ENCODE measurements at regions of chr3 and their contacts with region 1.

Region 1: DNA sequence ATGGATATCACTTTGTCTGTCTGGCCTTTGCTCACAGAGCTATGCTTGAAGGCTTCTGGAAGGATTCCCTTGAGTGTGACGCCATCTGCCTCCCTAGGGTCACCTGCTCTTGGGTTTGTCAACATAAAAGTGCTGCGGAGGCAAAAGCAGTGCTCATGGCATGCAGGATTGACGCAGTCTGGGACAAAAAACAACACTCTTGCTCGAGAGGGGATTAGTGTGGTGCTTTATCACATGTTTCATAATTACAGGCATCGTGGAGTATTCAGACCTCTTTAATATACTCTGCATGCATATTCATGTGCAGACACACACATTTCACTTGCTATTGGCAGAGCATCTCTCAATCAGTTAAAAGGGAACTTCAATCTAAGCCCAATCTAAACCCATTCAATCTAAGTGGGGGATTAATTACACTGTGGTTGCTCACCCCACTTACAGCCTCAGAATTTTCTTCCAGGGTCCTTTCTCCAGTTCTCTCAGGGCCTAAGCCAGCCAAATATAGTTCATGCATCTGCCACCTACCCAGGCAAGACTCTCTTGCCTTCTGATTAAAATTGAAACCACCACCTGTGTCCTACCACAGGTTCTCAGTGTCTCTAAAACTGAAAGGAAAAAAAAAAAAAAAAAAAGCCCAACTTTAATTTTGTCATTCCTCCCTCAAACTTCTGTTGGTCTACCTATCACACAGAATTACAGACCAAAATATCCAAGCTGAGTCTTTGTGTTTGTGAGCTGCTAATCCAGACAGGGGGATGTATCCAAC is 75.6 kb downstream of the BFSP2 start:
- DNase-seq: peak; percentile 37
- ATAC-seq: peak; percentile 96
- H3K4me3 Mint-ChIP-seq: no peak overlapping the region
- H3K27ac Mint-ChIP-seq: peak overlapping the region; percentile 52
- H3K4me1 Mint-ChIP-seq: peaks cover 49% of the 10 kb centered on the region
- H3K27me3 Mint-ChIP-seq: no peaks in the 10 kb centered on the region

Region 2: GRCh38 chr3:133448478-133449122 is 26.8 kb before region 1 on chr3:
- CTCF ChIA-PET with region 1: no interaction called
- POLR2A ChIA-PET with region 1: interaction called, 5 read pairs
- intact Hi-C with region 1: loop called in 1 of 2 experiments (anchors 1 kb)
- DNase-seq: peak; percentile 77
- ATAC-seq: peak; percentile 93
- H3K4me3 Mint-ChIP-seq: no peak overlapping the region
- H3K27ac Mint-ChIP-seq: peak overlapping the region; percentile 69
- H3K4me1 Mint-ChIP-seq: peaks cover 38% of the 10 kb centered on the region
- H3K27me3 Mint-ChIP-seq: no peaks in the 10 kb centered on the region

Region 3: DNA sequence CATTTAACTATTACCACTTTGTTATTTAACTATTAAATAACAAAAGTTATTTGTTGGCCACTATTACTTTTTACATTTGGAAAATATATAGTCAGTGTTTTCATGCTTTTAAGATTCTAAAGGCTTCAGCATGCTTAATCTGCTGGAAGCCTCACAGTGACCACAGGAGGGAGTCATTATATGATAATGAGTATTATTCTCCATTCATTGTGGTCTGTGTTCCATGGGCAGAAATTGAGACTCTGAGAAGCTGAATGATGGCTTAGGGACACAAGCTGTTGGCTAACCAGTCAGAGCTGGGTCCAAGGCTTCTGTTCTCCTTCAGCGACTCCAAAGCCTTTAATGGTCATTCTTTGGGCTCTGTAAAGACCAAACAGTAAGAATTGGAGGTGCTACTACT is 10.9 kb before region 1 on chr3:
- CTCF ChIA-PET with region 1: interaction called, 5 read pairs
- POLR2A ChIA-PET with region 1: no interaction called
- intact Hi-C with region 1: loop called in 1 of 2 experiments (anchors 1 kb)
- DNase-seq: no peak
- ATAC-seq: no peak
- H3K4me3 Mint-ChIP-seq: no peak overlapping the region
- H3K27ac Mint-ChIP-seq: no peak overlapping the region
- H3K4me1 Mint-ChIP-seq: peaks cover 44% of the 10 kb centered on the region
- H3K27me3 Mint-ChIP-seq: no peaks in the 10 kb centered on the region

Region 4: DNA sequence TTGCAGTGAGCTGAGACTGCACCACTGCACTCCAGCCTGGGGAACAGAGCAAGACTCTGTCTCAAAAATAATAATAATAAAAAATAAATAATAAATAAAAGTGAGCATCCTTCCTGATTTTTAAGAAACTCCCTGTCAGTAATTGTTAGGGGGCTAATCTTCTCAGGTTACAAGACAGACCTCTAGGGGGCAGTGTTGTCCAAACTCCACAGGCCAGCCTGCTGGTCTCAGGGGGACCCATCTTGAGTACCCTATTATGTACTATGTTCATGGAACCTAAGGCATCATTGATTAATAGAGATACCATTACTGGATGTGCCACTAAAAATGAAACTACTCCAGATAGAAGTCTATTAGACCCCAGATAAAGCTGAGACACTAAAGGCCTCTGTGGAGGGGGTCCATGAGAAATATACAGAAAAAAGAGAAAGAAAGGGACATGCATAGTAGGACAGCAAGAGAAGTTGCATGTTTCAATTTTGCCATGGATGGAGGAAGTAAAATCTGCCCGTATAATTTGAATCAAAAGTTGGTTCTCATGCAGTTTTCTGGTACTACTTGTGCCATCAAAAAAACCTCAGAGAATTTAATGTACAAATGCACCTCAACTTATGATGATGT is 12.6 kb after region 1 on chr3:
- CTCF ChIA-PET with region 1: interaction called, 34 read pairs
- POLR2A ChIA-PET with region 1: no interaction called
- intact Hi-C with region 1: no loop called
- DNase-seq: peak; percentile 69
- ATAC-seq: no peak
- H3K4me3 Mint-ChIP-seq: no peak overlapping the region
- H3K27ac Mint-ChIP-seq: no peak overlapping the region
- H3K4me1 Mint-ChIP-seq: peaks cover 49% of the 10 kb centered on the region
- H3K27me3 Mint-ChIP-seq: no peaks in the 10 kb centered on the region

Region 5: GRCh38 chr3:133527081-133527715 is 51.8 kb after region 1 on chr3:
- CTCF ChIA-PET with region 1: no interaction called
- POLR2A ChIA-PET with region 1: no interaction called
- intact Hi-C with region 1: no loop called
- DNase-seq: no peak
- ATAC-seq: no peak
- H3K4me3 Mint-ChIP-seq: no peak overlapping the region
- H3K27ac Mint-ChIP-seq: no peak overlapping the region
- H3K4me1 Mint-ChIP-seq: no peaks in the 10 kb centered on the region
- H3K27me3 Mint-ChIP-seq: no peaks in the 10 kb centered on the region

Region 6: DNA sequence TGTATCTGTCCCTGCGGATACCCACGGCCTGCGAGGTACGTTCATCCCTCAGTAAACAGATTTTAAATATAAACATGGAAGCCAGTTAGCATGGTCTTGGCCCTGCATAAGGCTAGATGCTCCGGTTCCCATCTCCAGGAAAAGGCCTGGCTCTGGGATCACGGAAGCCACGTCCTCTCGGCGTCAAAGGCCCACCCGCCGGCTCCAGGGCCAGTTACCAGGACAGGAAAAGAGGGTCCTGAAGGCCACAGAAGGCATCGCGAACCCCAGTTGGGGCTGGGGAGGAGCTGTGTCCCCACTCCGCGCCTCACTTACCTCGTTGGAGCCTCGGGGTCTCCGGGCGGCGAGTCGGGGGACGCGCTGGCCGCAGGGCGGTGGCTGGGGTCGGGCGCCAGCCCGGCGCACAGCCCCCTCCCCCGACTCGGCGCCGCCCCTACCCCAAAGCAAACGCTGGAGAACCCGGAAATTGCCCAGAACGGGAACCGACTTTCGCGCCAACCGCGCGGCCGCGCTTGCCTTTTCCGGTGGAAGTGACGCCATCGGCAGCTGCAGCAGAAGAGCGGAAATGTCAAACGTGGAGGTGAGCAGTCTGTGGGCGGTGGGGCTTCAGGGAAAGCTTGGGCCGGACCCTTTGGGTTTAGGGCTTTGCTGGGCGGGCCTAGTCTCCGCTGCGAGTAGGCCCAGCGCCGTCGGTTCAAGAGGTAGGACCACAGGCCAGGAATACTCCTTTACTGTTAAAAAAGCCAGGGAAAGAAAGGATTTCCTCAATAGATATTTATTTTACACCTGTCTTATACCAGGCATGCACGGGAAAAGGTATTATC is 186.2 kb after region 1 on chr3 and contains the start of gene TOPBP1:
- CTCF ChIA-PET with region 1: no interaction called
- POLR2A ChIA-PET with region 1: no interaction called
- intact Hi-C with region 1: loop called in 1 of 2 experiments (anchors 5 kb)
- DNase-seq: peak; percentile 94
- ATAC-seq: peak; percentile 85
- H3K4me3 Mint-ChIP-seq: peak within 1 kb of the TSS; percentile 91
- H3K27ac Mint-ChIP-seq: peak within 1 kb of the TSS; percentile 98
- H3K4me1 Mint-ChIP-seq: peaks cover 33% of the 10 kb centered on the region
- H3K27me3 Mint-ChIP-seq: no peaks in the 10 kb centered on the region
- total RNA-seq, gene TOPBP1: 80.9 to 94.6 TPM

Region 7: DNA sequence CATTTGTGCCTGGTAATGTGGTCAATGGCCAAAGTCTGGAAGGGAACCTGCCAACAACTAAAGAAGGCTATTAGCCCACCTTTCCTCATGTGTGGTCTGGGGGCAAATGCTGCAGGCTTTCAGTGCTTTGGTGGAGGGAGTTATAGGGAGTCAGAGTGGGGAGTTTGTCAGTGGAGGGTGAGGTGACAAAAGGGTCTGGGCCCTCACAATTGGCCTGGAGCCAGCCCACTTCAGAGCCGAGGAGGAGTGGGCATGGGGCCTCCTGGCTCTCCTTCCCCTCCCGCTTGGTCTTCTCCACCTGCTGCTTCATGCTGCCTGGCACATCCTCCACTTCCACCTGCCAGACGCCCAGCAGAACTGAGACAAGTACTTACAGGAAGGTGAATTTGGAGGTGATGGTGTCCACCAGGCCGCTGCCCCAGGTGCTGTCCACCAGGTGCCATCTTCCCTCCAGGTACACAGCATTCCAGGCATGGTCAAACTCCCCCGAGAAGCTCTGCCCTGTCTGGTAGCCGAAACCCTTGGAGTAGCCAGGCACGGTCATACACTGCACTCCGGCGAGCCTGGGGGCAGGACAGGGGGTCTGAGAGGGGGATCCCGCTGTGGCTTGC is 1134.5 kb after region 1 on chr3:
- CTCF ChIA-PET with region 1: no interaction called
- POLR2A ChIA-PET with region 1: no interaction called
- intact Hi-C with region 1: no loop called
- DNase-seq: no peak
- ATAC-seq: no peak
- H3K4me3 Mint-ChIP-seq: no peak overlapping the region
- H3K27ac Mint-ChIP-seq: no peak overlapping the region
- H3K4me1 Mint-ChIP-seq: no peaks in the 10 kb centered on the region
- H3K27me3 Mint-ChIP-seq: peaks cover 2% of the 10 kb centered on the region

Measured in activated CD4-positive, alpha-beta T cell treated with anti-CD3 and anti-CD28 coated beads for 36 hours (primary cell).